ENCODE measurements at regions of chr10 and their contacts with region 1.

Region 1: DNA sequence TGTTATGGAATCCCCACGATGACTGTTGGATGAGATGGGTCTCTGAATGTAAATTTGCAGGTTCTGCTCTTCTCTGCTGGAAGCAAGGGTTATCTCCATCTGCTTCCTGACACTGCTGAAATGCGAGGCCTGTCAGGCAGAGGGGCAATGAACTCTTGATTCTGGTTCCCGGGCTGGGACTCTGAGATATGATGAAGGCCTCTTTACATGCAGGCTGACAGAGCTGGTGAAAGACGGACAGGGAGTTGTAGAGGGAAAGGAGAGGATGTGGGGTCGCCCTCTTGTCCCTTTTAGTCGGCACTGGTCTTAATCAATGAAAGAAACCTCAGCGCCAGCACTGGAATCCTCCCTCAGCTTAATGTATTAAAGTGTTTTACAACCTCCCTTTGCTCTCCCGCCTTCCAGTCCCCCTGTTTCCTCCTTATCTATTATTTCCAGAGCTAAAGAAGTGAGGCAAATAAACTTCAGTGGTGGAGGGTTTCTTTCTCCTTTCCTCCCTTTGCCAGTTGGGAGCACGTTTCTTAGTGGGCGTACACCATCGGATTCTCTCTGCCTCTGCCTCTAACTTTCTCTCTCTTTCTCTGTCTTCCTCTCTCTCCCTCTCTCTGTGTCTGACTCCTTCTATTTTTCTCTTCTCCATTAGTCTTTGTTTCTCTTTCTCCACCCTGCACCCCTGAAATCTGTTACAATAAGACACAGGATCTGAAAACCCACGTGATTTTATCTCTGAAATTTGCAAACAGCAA is 145.6 kb downstream of the BAMBI start:
- DNase-seq: no peak

Region 2: DNA sequence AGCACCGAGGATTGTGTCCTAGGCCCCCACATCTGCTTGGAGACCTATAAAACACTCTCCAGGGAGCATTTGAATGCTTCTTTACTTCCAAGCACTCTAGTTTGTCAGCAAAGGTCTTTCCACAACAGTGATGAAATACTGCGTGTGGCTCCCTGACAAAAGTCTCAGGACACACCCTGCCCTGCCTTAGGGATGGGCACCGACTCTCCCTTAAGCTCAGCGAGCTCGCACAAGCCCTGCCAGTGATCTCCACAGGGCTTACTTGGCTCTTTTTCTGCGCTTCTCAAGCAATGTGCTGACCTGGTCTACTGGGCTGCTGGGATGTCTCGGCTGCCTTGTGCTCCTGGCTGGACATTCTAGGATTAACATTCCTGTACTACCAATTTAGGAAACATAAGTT is 435.8 kb before region 1 on chr10:
- CTCF ChIA-PET with region 1: interaction called, 10 read pairs
- POLR2A ChIA-PET with region 1: no interaction called
- DNase-seq: no peak

Region 3: DNA sequence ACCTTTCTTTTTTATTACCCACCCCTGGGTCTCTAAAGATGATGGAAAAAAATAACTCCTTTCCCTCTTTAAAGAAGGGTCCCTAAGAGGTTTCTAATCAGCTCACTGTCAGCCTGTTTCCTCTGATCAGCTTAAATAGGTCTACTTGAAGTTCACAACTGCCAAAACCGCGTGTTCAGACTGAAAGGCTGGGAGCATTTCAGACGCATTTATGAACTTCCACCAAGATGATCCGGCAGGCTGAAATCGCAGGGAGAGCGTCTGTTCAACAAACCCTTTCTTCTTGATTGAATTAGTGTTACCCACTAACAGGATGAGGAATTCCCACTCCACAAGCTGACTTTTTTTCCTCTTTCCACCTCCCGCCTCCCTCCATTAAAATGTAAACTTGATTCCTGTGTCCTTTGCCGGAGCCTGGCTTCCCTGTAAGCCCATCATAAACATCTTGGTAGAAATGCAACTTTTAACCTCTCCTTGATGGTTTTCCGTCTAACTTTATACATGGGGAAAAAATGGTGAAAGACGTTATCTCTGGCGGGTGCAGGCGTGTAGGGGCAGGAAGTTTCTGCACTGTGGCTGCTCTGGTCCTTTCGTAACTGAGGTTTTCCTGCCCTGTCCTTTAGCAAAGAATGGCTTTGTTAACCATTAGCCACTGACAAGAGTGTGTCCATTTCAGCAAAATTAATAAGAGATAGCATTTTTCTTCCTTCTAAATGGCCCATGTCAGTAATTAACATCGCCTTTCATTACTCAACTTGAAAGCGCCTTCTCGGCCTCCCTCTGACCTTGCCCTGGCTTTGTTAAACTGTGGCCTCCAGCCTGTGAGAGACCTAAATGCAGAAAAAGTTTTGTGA is 14.9 kb before region 1 on chr10:
- CTCF ChIA-PET with region 1: no interaction called
- POLR2A ChIA-PET with region 1: interaction called, 10 read pairs
- DNase-seq: no peak

Measured in HEK293T (cell line).